ENCODE measurements at regions of chr19 and their contacts with region 1.

Region 1: GRCh38 chr19:1039646-1040475 is at the start of gene ABCA7:
- DNase-seq: peak; percentile 98
- H3K4me3 Mint-ChIP-seq: peak within 1 kb of the TSS; percentile 86
- H3K27ac Mint-ChIP-seq: peak within 1 kb of the TSS; percentile 81
- H3K4me1 Mint-ChIP-seq: peaks cover 9% of the 10 kb centered on the region
- H3K27me3 Mint-ChIP-seq: no peaks in the 10 kb centered on the region
- CTCF ChIP-seq: no peak
- total RNA-seq, gene ABCA7: 22.7 and 24.3 TPM in 2 replicates

Region 2: GRCh38 chr19:1027953-1028902 is 11.6 kb before region 1 on chr19:
- CTCF ChIA-PET with region 1: interaction called, 13 read pairs
- intact Hi-C with region 1: no loop called
- DNase-seq: peak; percentile 59
- H3K4me3 Mint-ChIP-seq: peak overlapping the region; percentile 81
- H3K27ac Mint-ChIP-seq: no peak overlapping the region
- H3K4me1 Mint-ChIP-seq: no peaks in the 10 kb centered on the region
- H3K27me3 Mint-ChIP-seq: no peaks in the 10 kb centered on the region
- CTCF ChIP-seq: no peak

Measured in Calu3 (cell line).